Natural killer cell (primary cell): ENCODE measurements at regions of chr17 and their contacts with region 1.

Region 1: GRCh38 chr17:47733047-47733673 is at the start of gene TBX21:
- DNase-seq: peak; percentile 93 to 95
- ATAC-seq: peak; percentile 71 to 90 (median 82)
- H3K4me3 ChIP-seq: peak within 1 kb of the TSS; percentile 97
- H3K4me3 Mint-ChIP-seq: peak within 1 kb of the TSS; percentile 99
- H3K27ac ChIP-seq: peak within 1 kb of the TSS; percentile 83
- H3K27ac Mint-ChIP-seq: peak within 1 kb of the TSS; percentile 92 to 94
- H3K4me1 ChIP-seq: peaks cover 72% of the 10 kb centered on the region
- H3K4me1 Mint-ChIP-seq: peaks cover 67 to 71% of the 10 kb centered on the region in 2 donors
- H3K27me3 ChIP-seq: no peaks in the 10 kb centered on the region
- H3K27me3 Mint-ChIP-seq: no peaks in the 10 kb centered on the region
- CTCF ChIP-seq: peak; percentile 52
- total RNA-seq, gene TBX21: 234 to 328 (median 257) TPM

Region 2: DNA sequence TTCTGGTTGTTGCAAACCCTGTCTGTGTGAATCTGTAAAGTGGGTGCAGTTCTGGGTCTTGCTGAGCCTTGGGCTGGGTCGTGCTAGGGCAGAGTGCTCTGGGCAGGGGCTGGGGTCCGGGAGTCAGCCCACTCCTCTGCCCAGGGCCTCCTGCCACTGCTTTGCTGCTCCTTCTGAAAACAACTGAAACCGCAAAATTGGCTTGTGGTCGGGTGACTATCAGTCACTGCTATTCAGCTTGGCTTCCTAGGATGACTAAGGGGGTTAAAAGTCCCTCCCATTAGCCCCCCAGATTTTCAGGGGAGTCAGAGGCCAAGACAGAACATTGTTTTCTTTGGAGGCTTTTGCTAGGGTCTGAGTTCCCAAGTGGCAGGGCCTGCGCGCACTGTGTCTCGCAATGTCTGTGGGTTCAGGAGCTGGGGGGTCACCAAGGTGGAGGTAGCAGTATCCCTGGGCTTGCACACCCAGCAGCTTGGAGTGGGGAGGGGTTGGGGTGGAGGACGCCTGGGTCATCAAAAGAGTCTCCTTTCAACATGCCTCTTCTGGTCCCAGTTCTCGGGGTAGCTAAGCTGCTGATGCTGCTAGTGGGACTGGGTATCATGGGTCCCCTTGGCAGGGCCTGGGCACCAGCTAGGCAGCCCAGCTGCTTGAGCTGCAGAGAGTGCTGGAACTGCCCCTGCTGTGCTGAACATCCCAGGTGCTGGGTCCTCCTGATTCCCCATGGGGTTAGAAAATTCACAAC is 13.6 kb before region 1 on chr17:
- intact Hi-C with region 1: loop called (anchors 2 kb)
- DNase-seq: peak in 1 of 2 donors; percentile 68
- ATAC-seq: peak in 1 of 3 donors; percentile 19
- H3K4me3 ChIP-seq: no peak overlapping the region
- H3K4me3 Mint-ChIP-seq: peak overlapping the region; percentile 86
- H3K27ac ChIP-seq: peak overlapping the region; percentile 51
- H3K27ac Mint-ChIP-seq: peak overlapping the region; percentile 89 to 93
- H3K4me1 ChIP-seq: peaks cover 90% of the 10 kb centered on the region
- H3K4me1 Mint-ChIP-seq: peaks cover 67 to 80% of the 10 kb centered on the region in 2 donors
- H3K27me3 ChIP-seq: no peaks in the 10 kb centered on the region
- H3K27me3 Mint-ChIP-seq: no peaks in the 10 kb centered on the region
- CTCF ChIP-seq: no peak

Region 3: DNA sequence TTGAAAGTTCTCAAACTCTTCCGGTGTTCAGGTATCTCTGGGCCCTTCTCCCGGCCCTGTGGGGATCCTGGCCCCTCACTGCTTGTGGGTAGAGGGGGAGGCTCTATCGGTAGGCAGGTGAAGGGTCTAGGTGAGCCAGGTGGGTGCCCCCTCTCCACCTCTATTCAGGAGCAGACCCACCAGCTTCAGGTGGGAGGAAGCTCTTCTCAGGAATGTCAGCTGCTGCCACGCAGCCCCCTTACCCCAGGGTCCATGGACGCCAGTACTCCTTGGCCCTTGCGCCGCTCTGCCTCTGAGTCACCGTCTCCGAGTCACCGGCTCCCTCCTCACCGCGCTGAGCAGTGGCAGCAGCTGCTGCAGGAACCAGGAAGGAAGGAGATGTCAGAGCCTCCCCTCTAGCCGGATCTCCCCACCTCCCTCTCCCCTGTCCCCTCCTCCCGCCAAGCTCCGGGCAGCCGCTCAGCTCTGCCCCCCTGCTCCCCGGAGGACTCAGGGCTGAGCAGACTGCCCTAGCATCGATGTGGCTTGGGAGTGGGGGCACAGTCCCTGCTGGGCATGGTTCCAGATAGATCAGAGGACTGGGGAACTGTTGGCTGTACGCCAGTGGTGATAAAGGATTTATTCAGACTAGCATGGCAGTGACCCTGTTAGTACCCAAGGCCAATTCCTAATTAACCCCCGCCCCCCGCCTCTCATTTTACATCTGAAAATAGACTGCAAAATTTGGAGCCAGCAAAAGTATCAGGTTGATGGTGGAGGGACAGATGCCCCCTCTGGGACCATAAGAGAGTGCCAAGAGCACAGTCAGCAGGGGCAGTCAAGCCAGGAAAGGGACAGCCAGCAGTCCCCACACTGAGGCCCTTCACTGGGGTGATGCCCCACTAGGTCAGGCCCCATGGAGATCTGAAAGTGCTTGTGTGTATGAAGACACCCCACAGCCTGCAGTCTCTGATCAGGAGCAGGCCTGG is 88.5 kb after region 1 on chr17 and contains the start of gene OSBPL7:
- intact Hi-C with region 1: loop called (anchors 10 kb)
- DNase-seq: peak; percentile 74 to 89
- ATAC-seq: peak; percentile 96 to 98 (median 97)
- H3K4me3 ChIP-seq: peak within 1 kb of the TSS; percentile 65
- H3K4me3 Mint-ChIP-seq: peak within 1 kb of the TSS; percentile 97
- H3K27ac ChIP-seq: peak within 1 kb of the TSS; percentile 64
- H3K27ac Mint-ChIP-seq: peak within 1 kb of the TSS; percentile 90 to 98
- H3K4me1 ChIP-seq: peaks cover 28% of the 10 kb centered on the region
- H3K4me1 Mint-ChIP-seq: peaks cover 15 to 43% of the 10 kb centered on the region in 2 donors
- H3K27me3 ChIP-seq: no peaks in the 10 kb centered on the region
- H3K27me3 Mint-ChIP-seq: no peaks in the 10 kb centered on the region
- CTCF ChIP-seq: no peak
- total RNA-seq, gene OSBPL7: 113 to 162 (median 119) TPM

Region 4: DNA sequence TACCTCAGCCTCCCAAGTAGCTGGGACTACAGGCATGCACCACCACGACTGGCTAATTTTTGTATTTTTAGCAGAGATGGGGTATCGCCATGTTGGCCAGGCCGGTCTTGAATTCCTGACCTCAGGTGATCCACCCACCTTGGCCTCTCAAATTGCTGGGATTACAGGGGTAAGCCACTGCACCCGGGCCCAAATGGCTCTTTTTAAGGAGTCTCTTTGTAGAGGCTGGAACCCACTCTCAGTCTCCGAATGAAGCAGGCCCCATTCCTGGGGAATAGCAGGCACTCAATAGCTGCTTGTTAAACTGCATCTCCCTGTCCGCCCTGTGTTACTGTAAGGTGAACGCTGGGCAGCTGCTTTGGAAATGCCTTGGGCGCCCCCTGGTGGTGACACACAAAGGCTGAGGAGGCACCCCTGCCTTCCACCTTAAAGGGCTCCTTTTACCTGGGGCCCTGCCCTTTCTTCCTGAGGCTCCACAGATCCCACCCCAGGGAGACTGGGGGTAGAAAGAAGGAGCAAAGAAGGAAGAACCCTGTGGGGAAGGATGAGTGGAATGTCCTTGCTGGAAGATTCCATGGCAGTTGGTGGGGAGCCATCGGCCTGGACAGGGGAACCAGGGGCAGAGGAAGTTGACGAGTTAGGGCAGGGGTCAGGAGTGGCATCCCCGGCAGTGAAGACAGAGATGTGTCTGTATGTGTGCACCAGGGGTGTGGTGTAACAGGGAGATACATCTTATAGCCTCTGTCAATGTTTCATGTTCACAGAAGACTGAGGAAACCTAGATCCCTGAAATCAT is 156.8 kb after region 1 on chr17:
- intact Hi-C with region 1: no loop called
- DNase-seq: peak; percentile 89 to 93
- ATAC-seq: peak; percentile 91 to 100 (median 98)
- H3K4me3 ChIP-seq: no peak overlapping the region
- H3K4me3 Mint-ChIP-seq: no peak overlapping the region
- H3K27ac ChIP-seq: no peak overlapping the region
- H3K27ac Mint-ChIP-seq: peak overlapping the region in 1 of 2 donors; percentile 52
- H3K4me1 ChIP-seq: peaks cover under 1% of the 10 kb centered on the region
- H3K4me1 Mint-ChIP-seq: peaks cover 13 to 14% of the 10 kb centered on the region in 2 donors
- H3K27me3 ChIP-seq: no peaks in the 10 kb centered on the region
- H3K27me3 Mint-ChIP-seq: no peaks in the 10 kb centered on the region
- CTCF ChIP-seq: peak; percentile 93